A673 (cell line): ENCODE measurements at regions of chr11 and their contacts with region 1.

Region 1: GRCh38 chr11:115267871-115268270 is 236.3 kb downstream of the CADM1 start:
- DNase-seq: no peak
- H3K4me3 ChIP-seq: no peak overlapping the region
- H3K27ac ChIP-seq: no peak overlapping the region
- H3K4me1 ChIP-seq: no peaks in the 10 kb centered on the region
- H3K27me3 ChIP-seq: no peaks in the 10 kb centered on the region
- CTCF ChIP-seq: no peak

Region 2: GRCh38 chr11:115207166-115207591 is 60.7 kb before region 1 on chr11:
- CTCF ChIA-PET with region 1: no interaction called
- POLR2A ChIA-PET with region 1: interaction called, 11 read pairs
- intact Hi-C with region 1: no loop called
- DNase-seq: no peak
- H3K4me3 ChIP-seq: no peak overlapping the region
- H3K27ac ChIP-seq: no peak overlapping the region
- H3K4me1 ChIP-seq: no peaks in the 10 kb centered on the region
- H3K27me3 ChIP-seq: no peaks in the 10 kb centered on the region
- CTCF ChIP-seq: no peak

Region 3: DNA sequence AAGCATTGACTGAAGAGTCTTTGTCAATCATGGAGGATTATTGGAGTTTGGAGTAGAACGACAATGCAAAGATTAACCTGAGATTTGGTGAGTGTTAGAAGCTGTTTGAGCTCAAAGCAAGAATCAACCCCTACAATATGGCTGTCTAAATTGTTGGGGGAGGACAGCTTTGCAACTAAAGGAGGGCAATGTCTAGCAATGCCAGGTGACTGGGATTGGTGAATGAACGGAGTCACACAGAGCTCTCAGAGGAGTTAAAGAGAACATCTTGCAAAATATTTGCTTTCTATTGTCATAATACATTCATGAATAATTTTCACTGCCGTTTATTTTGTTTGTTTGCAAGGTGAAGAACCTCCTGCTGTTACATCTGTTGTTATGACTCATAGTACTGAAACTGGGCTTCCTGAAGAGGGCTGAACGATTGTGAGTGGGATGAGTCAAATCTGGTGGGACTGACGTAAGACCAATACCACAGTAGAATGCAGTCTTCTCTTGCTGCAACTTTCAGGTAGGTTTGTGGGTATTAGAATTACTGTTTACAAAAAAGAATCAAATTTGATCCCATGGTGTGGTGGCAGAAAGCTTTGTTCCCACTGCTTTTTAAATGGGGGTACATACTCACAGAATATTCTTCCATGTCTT is 45.5 kb before region 1 on chr11:
- CTCF ChIA-PET with region 1: no interaction called
- POLR2A ChIA-PET with region 1: no interaction called
- intact Hi-C with region 1: no loop called
- DNase-seq: peak; percentile 37
- H3K4me3 ChIP-seq: no peak overlapping the region
- H3K27ac ChIP-seq: no peak overlapping the region
- H3K4me1 ChIP-seq: no peaks in the 10 kb centered on the region
- H3K27me3 ChIP-seq: no peaks in the 10 kb centered on the region
- CTCF ChIP-seq: no peak

Region 4: GRCh38 chr11:115244758-115245157 is 23.1 kb before region 1 on chr11:
- CTCF ChIA-PET with region 1: no interaction called
- POLR2A ChIA-PET with region 1: no interaction called
- intact Hi-C with region 1: no loop called
- DNase-seq: no peak
- H3K4me3 ChIP-seq: no peak overlapping the region
- H3K27ac ChIP-seq: no peak overlapping the region
- H3K4me1 ChIP-seq: no peaks in the 10 kb centered on the region
- H3K27me3 ChIP-seq: no peaks in the 10 kb centered on the region
- CTCF ChIP-seq: no peak

Region 5: GRCh38 chr11:115955803-115956202 is 687.9 kb after region 1 on chr11:
- CTCF ChIA-PET with region 1: no interaction called
- POLR2A ChIA-PET with region 1: no interaction called
- intact Hi-C with region 1: no loop called
- DNase-seq: no peak
- H3K4me3 ChIP-seq: no peak overlapping the region
- H3K27ac ChIP-seq: no peak overlapping the region
- H3K4me1 ChIP-seq: peaks cover 5% of the 10 kb centered on the region
- H3K27me3 ChIP-seq: no peaks in the 10 kb centered on the region
- CTCF ChIP-seq: no peak